Activated CD4-positive, alpha-beta T cell treated with anti-CD3 and anti-CD28 coated beads for 36 hours (primary cell): ENCODE measurements at regions of chr2 and their contacts with region 1.

Region 1: DNA sequence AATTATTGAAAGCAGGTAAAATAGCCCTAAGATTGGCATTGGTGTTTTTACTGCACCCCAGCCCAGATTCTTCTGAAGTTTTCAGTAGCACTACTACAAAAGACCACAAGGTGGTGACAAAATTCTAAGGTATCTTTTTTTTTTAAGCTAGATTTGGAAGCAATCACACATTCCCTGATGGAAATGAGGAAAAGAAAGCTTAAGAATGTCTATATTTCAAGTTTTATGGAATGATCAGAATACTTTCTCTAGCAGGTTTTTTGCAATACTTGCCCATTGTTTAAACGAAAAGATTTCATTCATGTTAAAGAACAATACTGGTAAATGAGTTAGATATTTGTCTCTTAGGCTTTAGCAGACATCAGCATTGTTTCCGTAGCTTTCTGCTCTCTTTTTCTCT is 32.1 kb upstream of the ZNF638 start:
- DNase-seq: no peak
- ATAC-seq: no peak
- H3K4me3 Mint-ChIP-seq: no peak overlapping the region
- H3K27ac Mint-ChIP-seq: no peak overlapping the region
- H3K4me1 Mint-ChIP-seq: no peaks in the 10 kb centered on the region
- H3K27me3 Mint-ChIP-seq: no peaks in the 10 kb centered on the region

Region 2: GRCh38 chr2:71353248-71353647 is 53.7 kb after region 1 on chr2:
- CTCF ChIA-PET with region 1: interaction called, 4 read pairs
- POLR2A ChIA-PET with region 1: no interaction called
- intact Hi-C with region 1: loop called in 1 of 2 experiments (anchors 2 kb)
- DNase-seq: peak; percentile 10
- ATAC-seq: peak; percentile 98
- H3K4me3 Mint-ChIP-seq: no peak overlapping the region
- H3K27ac Mint-ChIP-seq: peak overlapping the region; percentile 67
- H3K4me1 Mint-ChIP-seq: peaks cover 59% of the 10 kb centered on the region
- H3K27me3 Mint-ChIP-seq: no peaks in the 10 kb centered on the region

Region 3: DNA sequence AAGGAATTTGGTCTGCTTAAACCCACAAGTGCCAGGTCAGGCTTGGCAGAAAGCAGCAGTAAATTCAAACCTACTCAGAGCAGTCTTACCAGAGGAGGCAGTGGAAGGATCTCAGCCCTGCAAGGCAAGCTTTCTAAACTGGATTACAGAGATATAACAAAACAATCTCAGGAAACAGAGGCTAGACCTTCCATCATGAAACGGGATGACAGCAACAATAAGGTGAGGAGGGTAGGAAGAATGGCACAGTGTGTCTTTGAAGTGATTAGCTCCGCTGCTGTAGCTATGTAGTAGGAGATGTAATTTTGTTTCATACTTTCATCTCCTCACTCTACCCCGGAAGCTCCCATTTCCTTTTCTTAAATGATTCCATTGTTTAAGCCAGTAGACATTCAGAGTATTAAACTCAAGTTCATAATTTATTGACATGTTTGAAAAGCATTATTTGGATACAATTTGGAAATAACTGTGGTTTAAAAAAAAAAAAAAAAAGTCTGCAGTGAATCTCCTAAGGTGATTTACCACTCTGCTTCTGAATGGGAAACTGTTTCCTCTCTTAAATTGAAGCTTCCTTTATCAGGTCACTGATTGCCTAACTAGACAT is 124.4 kb after region 1 on chr2:
- CTCF ChIA-PET with region 1: no interaction called
- POLR2A ChIA-PET with region 1: no interaction called
- intact Hi-C with region 1: no loop called
- DNase-seq: no peak
- ATAC-seq: no peak
- H3K4me3 Mint-ChIP-seq: no peak overlapping the region
- H3K27ac Mint-ChIP-seq: no peak overlapping the region
- H3K4me1 Mint-ChIP-seq: peaks cover 3% of the 10 kb centered on the region
- H3K27me3 Mint-ChIP-seq: no peaks in the 10 kb centered on the region